Right ventricle myocardium superior (tissue), 1 donor: ENCODE measurements at regions of chr2 and their contacts with region 1.

Region 1: DNA sequence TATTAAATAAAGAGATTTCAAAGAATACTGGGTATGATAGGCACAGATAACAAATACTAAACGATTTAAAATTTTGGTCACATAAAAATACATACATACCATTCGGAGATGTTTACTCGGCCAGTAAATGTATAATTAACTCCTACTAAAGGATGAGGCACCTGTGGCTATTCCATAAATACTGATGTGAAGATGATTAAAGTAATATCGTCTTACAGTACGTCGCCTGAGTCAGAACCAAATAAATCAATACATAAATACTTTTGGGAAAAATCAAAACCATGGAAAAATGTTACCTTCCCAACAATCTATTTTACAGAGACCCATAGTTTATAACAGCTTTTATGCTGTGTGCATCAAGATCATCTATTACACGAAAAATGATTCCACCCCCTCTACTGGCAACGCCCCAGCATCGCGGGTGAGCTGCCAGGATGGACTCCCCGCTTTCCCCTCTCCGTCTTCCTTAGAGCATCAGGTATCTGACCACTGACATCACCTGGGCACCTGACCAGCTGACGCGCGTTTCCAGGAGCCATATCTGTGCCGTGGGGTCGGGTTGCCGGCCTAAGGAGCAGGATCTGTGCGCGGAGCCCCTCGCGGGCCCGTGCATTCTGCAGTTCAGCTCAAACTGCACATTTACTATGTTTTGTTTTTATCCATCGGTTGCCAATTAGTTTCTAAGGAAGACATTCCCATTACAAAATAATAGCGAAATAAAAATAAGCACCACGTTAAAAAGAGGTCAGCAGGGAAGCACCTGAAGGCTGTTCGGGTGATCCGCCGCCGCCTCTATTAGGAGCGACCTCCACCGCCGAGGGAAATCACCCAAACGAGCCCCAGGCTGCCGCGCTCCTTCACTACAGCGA is 901 bp downstream of the ICA1L start:
- DNase-seq: peak; percentile 67
- ATAC-seq: peak; percentile 94

Region 2: DNA sequence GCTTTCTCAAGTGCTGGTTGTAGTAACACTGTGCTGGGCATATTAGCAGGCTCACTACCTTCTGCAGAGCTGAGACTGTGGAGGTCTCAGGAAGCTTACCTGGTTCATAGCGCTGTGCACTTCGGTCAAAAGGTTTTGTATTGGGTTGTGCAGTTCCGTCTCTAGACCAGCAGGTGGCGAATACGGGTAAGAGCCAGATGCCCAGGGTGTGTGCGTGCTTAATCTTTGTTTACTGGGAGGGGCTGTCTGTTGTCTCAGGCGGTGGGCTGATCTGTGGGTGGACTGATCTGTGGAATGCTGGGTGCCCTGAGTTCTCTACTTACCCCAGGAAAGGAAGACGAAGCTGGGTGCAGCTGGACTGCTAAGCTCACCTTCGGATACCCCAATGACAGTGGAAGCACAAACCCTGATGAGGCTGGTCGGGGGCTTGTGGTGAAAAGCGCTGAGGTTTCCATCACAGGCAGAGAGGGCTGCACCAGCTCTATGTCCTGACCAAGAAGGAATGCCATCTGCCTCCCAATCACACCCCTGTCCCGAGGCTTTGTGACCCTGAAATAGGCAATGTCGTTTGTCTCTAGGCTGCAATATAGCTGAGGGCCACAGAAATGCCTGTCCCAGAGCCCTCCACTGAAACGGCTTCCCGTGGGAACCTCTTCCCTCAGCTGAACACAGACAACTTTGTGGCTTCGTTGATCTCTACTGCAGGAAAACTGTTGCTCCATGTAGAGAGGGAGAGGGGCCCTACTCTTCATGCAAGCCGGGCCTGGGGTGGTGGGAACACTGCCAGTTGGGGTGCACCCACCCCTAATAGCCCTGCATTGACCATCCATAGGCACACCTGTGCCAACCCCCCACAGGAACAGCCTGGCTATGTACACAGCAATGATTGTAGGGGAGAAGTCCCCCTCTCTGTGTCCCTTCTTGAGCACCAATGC is 281.8 kb before region 1 on chr2:
- intact Hi-C with region 1: loop called (anchors 2 kb)
- DNase-seq: peak; percentile 71
- ATAC-seq: peak; percentile 87

Region 3: GRCh38 chr2:202815548-202816360 is 54.9 kb before region 1 on chr2:
- intact Hi-C with region 1: no loop called
- DNase-seq: no peak
- ATAC-seq: peak; percentile 82